Activated B cell treated with CpG ODN at 0.5 μM for 24 hours (primary cell): ENCODE measurements at regions of chr5 and their contacts with region 1.

Region 1: DNA sequence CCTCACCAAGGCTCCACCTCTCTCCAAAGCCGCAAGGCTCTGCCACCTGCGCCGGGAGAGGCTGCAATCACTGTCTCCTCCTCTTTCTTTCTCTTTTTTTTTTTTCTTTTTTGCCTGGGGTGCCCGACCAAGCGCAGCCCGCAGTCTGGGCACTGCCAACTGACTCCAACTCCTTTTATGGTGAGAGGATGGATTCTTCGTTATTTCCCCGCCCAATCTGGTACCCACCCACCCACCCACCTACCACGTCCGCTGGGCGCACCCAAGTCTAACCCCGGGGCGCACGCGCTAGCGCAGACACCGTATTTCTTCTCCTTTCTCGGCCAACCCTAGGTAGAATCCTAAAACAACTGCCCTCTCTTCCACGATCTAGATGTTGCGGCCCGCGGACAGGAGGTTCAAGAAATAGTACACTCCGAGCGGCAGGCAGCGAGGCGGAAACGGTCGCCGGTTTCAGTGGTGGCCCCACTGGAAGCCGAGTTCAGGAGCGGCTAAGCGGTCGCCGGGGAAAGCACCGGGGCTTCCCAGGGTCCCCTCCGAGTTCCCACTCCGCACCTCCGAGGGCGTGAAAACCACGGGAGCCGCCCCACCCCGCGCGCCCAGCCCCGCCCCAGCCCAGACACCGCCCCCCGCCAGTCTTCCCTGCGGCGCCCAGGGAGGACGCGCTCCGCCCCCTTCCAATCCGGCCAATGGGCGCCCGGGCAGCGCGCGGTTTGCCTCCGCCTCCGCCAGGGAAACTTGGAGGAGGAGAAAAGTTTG is 381 bp upstream of the PTGER4 start:
- DNase-seq: peak; percentile 79
- ATAC-seq: peak; percentile 74
- H3K4me3 Mint-ChIP-seq: peak overlapping the region; percentile 98
- H3K27ac Mint-ChIP-seq: peak overlapping the region; percentile 92
- H3K4me1 Mint-ChIP-seq: peaks cover 48% of the 10 kb centered on the region
- H3K27me3 Mint-ChIP-seq: no peaks in the 10 kb centered on the region
- CTCF ChIP-seq: no peak

Region 2: GRCh38 chr5:40223884-40224402 is 455.4 kb before region 1 on chr5:
- CTCF ChIA-PET with region 1: no interaction called
- POLR2A ChIA-PET with region 1: no interaction called
- intact Hi-C with region 1: loop called (anchors 1 kb)
- DNase-seq: no peak
- ATAC-seq: peak; percentile 63
- H3K4me3 Mint-ChIP-seq: peak overlapping the region; percentile 21
- H3K27ac Mint-ChIP-seq: peak overlapping the region; percentile 79
- H3K4me1 Mint-ChIP-seq: peaks cover 45% of the 10 kb centered on the region
- H3K27me3 Mint-ChIP-seq: peaks cover 5% of the 10 kb centered on the region
- CTCF ChIP-seq: no peak

Region 3: DNA sequence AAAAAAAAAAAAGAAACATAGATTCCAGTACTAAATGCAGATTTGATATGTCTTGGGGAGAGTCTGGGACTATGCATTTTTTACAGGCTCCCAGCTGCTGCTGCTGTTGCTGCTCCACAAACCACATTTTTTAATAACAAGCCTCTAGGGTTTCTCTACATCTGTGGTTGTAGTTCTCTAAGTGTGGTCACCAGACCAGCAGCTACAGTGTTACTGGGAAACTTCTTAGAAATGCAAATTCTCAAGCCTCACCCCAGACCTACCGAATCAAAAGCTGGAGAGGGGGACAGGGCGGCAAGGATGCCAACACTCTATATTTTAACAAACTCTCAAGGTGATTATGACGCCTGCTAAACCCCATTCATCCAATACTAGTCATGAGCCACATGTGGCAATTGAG is 293.0 kb before region 1 on chr5:
- CTCF ChIA-PET with region 1: interaction called, 3 read pairs
- POLR2A ChIA-PET with region 1: interaction called, 8 read pairs
- intact Hi-C with region 1: loop called (anchors 1 kb)
- DNase-seq: no peak
- ATAC-seq: peak; percentile 78
- H3K4me3 Mint-ChIP-seq: peak overlapping the region; percentile 25
- H3K27ac Mint-ChIP-seq: peak overlapping the region; percentile 66
- H3K4me1 Mint-ChIP-seq: peaks cover 50% of the 10 kb centered on the region
- H3K27me3 Mint-ChIP-seq: no peaks in the 10 kb centered on the region
- CTCF ChIP-seq: no peak

Region 4: DNA sequence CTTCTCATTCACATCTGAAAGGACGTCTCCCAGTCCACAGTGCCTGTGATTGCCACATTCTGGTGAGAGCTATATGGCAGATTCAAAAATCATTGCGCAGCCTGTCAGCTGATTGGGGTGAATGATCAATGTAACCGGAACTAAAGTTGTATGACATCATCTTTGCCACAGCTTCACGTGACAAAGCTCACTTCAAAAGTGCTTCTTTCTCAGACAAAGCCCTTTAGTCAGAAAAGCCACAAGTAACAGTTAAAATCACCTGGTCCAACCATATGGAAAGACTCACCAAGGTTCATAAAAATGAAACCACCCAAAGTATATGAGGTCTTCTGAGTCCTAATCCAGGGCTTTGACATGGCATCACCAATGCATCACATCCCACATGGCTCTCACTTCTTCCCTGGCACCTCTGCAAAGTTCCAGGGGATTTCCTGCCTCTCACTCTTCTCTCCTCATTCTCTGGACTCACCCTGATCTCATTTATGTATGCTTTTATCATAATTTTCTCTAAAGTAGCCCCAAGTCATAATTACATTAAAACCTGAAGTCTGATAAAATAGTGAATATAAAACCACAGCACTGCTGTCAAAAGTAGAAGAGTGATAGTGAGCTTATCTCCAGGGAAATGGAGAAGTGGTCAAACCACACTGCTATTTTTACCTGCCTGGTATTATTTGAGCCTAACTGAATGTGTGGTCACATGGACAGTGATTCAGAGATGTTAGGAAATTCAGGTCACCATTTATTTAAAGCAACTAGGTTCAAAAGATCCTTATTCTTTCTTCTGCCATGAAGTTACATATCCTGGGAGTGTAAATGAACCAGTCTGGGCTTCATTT is 192.7 kb before region 1 on chr5:
- CTCF ChIA-PET with region 1: interaction called, 4 read pairs
- POLR2A ChIA-PET with region 1: interaction called, 32 read pairs
- intact Hi-C with region 1: loop called (anchors 1 kb)
- DNase-seq: no peak
- ATAC-seq: peak; percentile 38
- H3K4me3 Mint-ChIP-seq: peak overlapping the region; percentile 64
- H3K27ac Mint-ChIP-seq: peak overlapping the region; percentile 87
- H3K4me1 Mint-ChIP-seq: peaks cover 82% of the 10 kb centered on the region
- H3K27me3 Mint-ChIP-seq: no peaks in the 10 kb centered on the region
- CTCF ChIP-seq: no peak

Region 5: GRCh38 chr5:40551496-40552491 is 127.5 kb before region 1 on chr5:
- CTCF ChIA-PET with region 1: no interaction called
- POLR2A ChIA-PET with region 1: no interaction called
- intact Hi-C with region 1: no loop called
- DNase-seq: no peak
- ATAC-seq: no peak
- H3K4me3 Mint-ChIP-seq: no peak overlapping the region
- H3K27ac Mint-ChIP-seq: no peak overlapping the region
- H3K4me1 Mint-ChIP-seq: peaks cover 8% of the 10 kb centered on the region
- H3K27me3 Mint-ChIP-seq: no peaks in the 10 kb centered on the region
- CTCF ChIP-seq: no peak

Region 6: DNA sequence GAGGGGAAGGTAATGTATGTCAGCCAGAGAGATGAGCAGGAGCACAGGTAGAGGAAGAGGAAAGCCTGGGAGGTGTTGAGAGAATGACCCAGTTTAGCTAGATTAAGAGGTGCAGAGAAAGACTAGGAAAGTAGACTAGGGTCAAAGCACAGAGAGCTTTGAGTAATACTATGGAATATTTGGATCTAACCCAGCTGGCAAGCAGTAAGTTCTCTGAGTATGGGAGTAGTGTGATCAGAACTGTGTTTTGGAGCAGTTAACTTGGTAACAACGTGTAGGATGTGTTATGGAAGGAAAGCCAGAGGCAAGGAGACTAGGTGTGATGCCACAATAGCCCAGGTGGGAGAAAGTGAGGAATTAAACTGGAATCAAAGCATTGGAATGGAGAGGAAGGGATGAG is 84.5 kb before region 1 on chr5:
- CTCF ChIA-PET with region 1: no interaction called
- POLR2A ChIA-PET with region 1: interaction called, 3 read pairs
- intact Hi-C with region 1: loop called (anchors 1 kb)
- DNase-seq: no peak
- ATAC-seq: no peak
- H3K4me3 Mint-ChIP-seq: no peak overlapping the region
- H3K27ac Mint-ChIP-seq: no peak overlapping the region
- H3K4me1 Mint-ChIP-seq: peaks cover 27% of the 10 kb centered on the region
- H3K27me3 Mint-ChIP-seq: no peaks in the 10 kb centered on the region
- CTCF ChIP-seq: no peak

Region 7: DNA sequence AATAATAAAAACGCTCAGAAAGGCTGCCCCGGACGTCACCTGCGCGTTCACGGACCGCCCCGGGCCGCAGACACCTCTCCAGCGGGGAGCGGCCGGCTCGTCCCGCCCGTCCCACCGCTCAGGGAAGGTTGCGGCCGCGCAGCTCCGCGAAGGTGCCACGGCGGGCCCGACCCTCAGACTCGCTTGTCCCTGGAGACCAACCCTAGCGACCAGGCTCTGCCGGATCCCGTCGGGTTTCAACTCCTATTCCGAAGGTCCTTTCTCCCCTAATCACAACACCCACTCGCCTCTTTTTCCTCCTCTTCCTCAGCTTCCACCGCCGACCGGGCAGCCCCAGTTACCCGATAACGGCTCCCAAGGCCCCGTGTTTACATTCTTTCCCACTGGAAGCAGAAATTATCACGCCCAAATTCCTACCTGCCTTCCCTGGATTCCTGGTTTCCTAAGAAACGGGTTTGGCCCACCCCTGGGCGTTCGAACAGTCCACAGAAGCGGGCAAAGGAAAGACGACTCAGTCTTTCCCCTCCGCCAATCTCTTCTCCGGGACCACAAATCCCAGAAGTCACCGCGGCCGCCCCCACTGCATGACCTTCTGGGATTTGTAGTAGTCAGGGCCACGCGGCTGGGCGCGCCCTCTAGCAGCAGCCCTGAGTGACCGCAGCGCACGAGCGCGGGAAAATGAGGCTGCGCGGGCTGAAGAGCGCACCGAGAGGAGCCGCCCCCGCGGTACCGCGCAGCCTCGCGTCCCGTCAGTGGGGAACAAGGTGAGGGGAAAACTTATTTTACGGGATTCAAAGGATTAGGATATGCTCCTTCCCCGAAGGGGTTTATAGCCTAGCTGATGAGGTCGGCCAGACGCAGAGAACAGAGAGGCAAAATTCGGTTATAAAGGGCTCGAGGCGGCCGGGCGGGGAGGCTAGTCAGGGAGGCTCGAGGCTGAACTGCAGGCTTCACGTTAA is 76.4 kb after region 1 on chr5 and contains the start of gene TTC33:
- CTCF ChIA-PET with region 1: interaction called, 4 read pairs
- POLR2A ChIA-PET with region 1: no interaction called
- intact Hi-C with region 1: loop called (anchors 1 kb)
- DNase-seq: peak; percentile 88
- ATAC-seq: peak; percentile 93
- H3K4me3 Mint-ChIP-seq: no peak within 1 kb of the TSS
- H3K27ac Mint-ChIP-seq: no peak within 1 kb of the TSS
- H3K4me1 Mint-ChIP-seq: peaks cover 7% of the 10 kb centered on the region
- H3K27me3 Mint-ChIP-seq: no peaks in the 10 kb centered on the region
- CTCF ChIP-seq: no peak
- total RNA-seq, gene TTC33: 9.0 and 9.2 TPM in 2 replicates

Region 8: DNA sequence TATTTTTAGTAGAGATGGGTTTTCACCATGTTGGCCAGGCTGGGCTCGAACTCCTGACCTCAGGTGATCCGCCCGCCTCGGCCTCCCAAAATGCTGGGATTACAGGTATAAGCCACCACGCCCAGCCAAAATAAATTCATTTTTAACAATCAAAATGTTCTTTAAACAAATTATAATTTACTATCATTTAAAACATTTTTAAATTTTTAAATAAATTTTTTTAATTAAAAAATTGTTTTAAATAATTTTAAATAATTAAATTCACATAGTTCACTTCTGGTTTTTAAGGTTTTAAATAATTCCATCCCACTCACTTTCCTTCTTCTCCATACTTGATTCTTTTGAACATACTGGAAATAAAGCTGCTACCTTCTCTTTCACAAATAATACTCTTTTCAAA is 91.4 kb after region 1 on chr5:
- CTCF ChIA-PET with region 1: no interaction called
- POLR2A ChIA-PET with region 1: no interaction called
- intact Hi-C with region 1: no loop called
- DNase-seq: no peak
- ATAC-seq: no peak
- H3K4me3 Mint-ChIP-seq: no peak overlapping the region
- H3K27ac Mint-ChIP-seq: no peak overlapping the region
- H3K4me1 Mint-ChIP-seq: no peaks in the 10 kb centered on the region
- H3K27me3 Mint-ChIP-seq: no peaks in the 10 kb centered on the region
- CTCF ChIP-seq: no peak